ENCODE measurements at regions of chr4 and their contacts with region 1.

Region 1: GRCh38 chr4:173334085-173334772 is at the start of gene HMGB2:
- DNase-seq: peak; percentile 99 to 100
- H3K4me3 ChIP-seq: peak within 1 kb of the TSS; percentile 88
- H3K4me1 ChIP-seq: peaks cover 27% of the 10 kb centered on the region
- H3K27me3 ChIP-seq: no peaks in the 10 kb centered on the region

Region 2: GRCh38 chr4:173370477-173371291 is 36.5 kb after region 1 on chr4 and contains the start of gene SAP30:
- in situ Hi-C with region 1: loop called (anchors 5 kb)
- DNase-seq: peak; percentile 96 to 99
- H3K4me3 ChIP-seq: peak within 1 kb of the TSS; percentile 75
- H3K4me1 ChIP-seq: peaks cover 27% of the 10 kb centered on the region
- H3K27me3 ChIP-seq: no peaks in the 10 kb centered on the region